Gastrocnemius medialis (tissue), 4 donors: ENCODE measurements at regions of chr20 and their contacts with region 1.

Region 1: DNA sequence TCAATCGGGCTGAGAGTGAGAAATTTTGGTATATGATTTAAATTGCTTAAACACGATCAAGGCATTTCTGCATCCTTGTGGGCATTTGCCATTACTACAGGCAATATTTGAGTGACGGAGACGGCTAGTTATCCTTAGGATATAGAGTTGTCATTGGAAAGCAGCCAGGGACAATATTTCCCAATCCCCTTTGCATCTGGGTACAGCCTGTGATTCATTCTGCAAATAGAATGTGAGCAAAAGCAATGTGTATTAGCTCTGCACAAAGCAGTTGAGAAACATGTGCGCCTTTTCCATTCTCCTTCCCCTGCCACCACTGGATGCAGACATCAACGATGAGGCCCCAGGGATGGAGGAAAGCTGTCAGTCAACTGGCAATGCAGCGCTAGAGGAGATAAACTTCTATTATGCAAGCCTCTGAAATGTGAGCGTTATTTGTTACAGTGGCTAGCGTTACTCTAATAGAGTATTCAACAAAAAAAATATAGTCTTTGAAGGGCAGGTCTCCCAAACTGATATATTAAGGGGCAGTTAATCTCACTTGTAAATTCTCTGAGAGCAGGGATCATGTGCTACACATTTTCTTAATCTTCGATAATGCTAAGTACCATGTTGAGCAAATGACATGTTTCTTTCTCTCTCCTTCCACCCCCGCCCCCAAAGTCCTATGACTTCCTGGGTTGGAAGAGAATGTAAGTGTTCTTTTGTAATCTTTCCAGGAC is 37.1 kb upstream of the NCOA3 start:
- DNase-seq: peak; percentile 91 to 92
- ATAC-seq: peak; percentile 90 to 95
- H3K4me3 ChIP-seq: peak overlapping the region in 1 of 4 donors; percentile 17
- H3K27ac ChIP-seq: peak overlapping the region; percentile 84 to 95 (median 90)
- H3K4me1 ChIP-seq: peaks cover 22 to 33% of the 10 kb centered on the region in 2 donors
- H3K27me3 ChIP-seq: no peaks in the 10 kb centered on the region
- CTCF ChIP-seq: peak; percentile 59 to 85 (median 76)
- POLR2A ChIP-seq: peak; percentile 22 to 55

Region 2: DNA sequence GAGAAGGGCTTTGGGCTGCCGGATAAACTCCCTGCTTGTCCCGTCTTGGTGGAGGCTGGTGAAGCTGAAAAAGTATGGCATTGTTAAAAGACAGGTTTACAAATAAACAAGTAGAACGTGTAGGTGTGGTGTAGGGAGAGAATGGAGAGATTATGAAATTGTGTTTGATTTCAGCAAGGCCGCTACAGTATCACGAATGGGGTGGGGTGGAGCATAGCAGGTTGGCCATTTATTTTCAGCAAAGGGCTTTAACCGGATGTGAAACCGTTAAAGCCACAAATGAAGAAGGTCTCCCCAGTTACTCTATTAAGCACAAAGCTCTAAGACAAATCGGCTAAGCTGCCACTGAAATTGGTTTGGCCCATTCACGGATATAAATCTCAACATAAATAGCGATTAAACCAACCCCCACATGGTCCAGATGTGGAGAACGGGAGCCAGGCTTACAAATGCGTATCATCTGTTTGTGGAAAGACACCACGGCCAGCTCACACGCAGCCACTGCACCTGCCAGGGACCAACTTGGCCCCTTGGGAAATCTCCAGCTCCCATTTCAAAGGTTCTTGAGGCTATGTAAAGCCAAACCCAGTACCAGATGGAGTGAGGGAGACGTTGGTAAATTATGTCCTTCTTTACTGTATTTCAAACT is 202.1 kb before region 1 on chr20:
- in situ Hi-C with region 1: no loop called
- intact Hi-C with region 1: loop called (anchors 5 kb)
- DNase-seq: peak; percentile 22 to 64
- ATAC-seq: peak; percentile 67 to 72
- H3K4me3 ChIP-seq: no peak overlapping the region
- H3K27ac ChIP-seq: peak overlapping the region; percentile 47 to 87 (median 72)
- H3K4me1 ChIP-seq: peaks cover 28 to 31% of the 10 kb centered on the region in 2 donors
- H3K27me3 ChIP-seq: no peaks in the 10 kb centered on the region
- CTCF ChIP-seq: no peak
- POLR2A ChIP-seq: no peak

Region 3: DNA sequence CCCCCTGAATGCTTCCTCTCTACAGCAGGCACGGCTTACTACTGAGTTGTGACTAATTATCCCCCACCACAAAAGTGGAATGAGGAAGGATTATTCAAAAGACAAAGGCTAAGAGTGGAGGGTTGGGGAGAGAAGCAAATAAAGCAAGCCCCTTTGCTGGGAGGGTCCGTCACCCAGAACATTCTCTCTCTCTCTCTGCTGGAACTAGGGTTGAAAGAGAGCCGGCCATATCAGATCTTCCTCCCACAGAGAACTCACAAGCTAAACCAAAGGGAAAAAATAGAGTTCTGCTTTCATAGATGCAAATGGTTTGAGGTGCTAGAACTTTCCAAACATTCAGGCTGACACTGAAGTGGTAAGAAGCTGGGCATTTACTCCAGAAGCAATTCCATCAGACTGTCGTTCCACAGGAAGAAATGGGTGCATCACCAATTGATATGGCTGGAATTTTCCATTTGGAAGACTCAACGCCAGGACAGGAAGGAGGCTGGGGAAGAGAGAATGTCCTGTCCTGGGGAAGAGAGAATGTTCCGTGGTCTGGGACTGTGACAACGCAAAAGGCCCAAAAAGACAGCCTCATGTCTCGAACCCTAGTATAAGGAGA is 115.9 kb before region 1 on chr20:
- in situ Hi-C with region 1: no loop called
- intact Hi-C with region 1: no loop called
- DNase-seq: no peak
- ATAC-seq: peak in 1 of 2 donors; percentile 30
- H3K4me3 ChIP-seq: peak overlapping the region in 2 of 4 donors; percentile 2 to 6
- H3K27ac ChIP-seq: peak overlapping the region; percentile 96 to 100 (median 97)
- H3K4me1 ChIP-seq: peaks cover 68 to 71% of the 10 kb centered on the region in 2 donors
- H3K27me3 ChIP-seq: no peaks in the 10 kb centered on the region
- CTCF ChIP-seq: no peak
- POLR2A ChIP-seq: no peak

Region 4: DNA sequence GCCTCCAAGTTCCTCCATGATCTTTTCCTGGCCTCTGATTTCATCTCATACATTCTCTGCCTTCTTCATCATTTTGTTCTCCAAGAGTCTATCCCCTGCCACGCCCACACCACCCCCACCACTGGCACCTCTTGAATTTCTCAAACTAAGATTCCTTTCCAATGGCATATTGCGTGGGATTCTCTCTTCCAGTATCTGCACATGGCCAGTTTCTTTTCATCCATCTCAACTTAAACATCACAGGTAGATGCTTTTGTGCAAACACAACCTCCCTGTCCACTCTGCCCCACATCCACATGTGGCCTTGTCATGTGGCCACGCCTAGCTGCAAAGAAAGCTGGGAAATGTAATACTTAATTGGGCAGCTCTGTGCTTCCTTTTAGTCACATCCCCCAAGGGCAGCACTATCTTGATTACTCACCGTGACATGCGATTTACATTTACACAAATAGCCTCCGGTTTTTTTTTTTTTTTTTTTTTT is 74.6 kb before region 1 on chr20:
- in situ Hi-C with region 1: no loop called
- intact Hi-C with region 1: no loop called
- DNase-seq: no peak
- ATAC-seq: no peak
- H3K4me3 ChIP-seq: no peak overlapping the region
- H3K27ac ChIP-seq: peak overlapping the region in 1 of 4 donors; percentile 10
- H3K4me1 ChIP-seq: peaks cover 0 to 3% of the 10 kb centered on the region in 2 donors
- H3K27me3 ChIP-seq: no peaks in the 10 kb centered on the region
- CTCF ChIP-seq: no peak
- POLR2A ChIP-seq: no peak

Region 5: DNA sequence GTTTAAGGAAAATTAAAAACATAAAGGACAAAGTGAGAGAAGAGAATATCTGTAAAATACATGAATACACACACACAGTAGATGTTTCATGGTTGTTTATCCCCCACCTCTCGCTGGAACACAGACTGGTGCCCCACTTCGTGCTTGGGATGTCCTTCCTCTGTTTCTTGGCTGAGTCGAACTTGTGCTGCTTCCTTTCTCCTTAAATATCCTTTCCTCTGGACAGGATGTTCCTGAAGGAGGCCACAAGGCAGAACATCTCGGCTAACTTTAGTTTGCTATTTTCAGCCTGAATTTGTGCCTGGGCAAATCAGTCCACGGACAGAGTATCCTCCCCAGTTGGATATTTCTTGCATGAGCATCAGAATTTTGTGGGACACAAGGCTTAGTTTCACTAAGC is 53.4 kb before region 1 on chr20:
- in situ Hi-C with region 1: loop called in 1 of 4 experiments (anchors 10 kb)
- intact Hi-C with region 1: loop called (anchors 2 kb)
- DNase-seq: peak; percentile 75 to 79
- ATAC-seq: peak; percentile 92 to 96
- H3K4me3 ChIP-seq: peak overlapping the region; percentile 15 to 50 (median 44)
- H3K27ac ChIP-seq: peak overlapping the region; percentile 91 to 94 (median 91)
- H3K4me1 ChIP-seq: peaks cover 23 to 54% of the 10 kb centered on the region in 2 donors
- H3K27me3 ChIP-seq: no peaks in the 10 kb centered on the region
- CTCF ChIP-seq: no peak
- POLR2A ChIP-seq: peak; percentile 63 to 83

Region 6: GRCh38 chr20:47493175-47493962 is 28.8 kb after region 1 on chr20:
- in situ Hi-C with region 1: no loop called
- intact Hi-C with region 1: loop called (anchors 2 kb)
- DNase-seq: peak; percentile 87 to 93
- ATAC-seq: peak; percentile 94 to 95
- H3K4me3 ChIP-seq: peak overlapping the region in 3 of 4 donors; percentile 5 to 7 (median 5)
- H3K27ac ChIP-seq: peak overlapping the region; percentile 80 to 87 (median 84)
- H3K4me1 ChIP-seq: peaks cover 19 to 21% of the 10 kb centered on the region in 2 donors
- H3K27me3 ChIP-seq: no peaks in the 10 kb centered on the region
- CTCF ChIP-seq: no peak
- POLR2A ChIP-seq: peak in 1 of 2 donors; percentile 28

Region 7: GRCh38 chr20:47568001-47568407 is 103.5 kb after region 1 on chr20:
- in situ Hi-C with region 1: no loop called
- intact Hi-C with region 1: loop called (anchors 1 kb)
- DNase-seq: no peak
- ATAC-seq: peak in 1 of 2 donors; percentile 11
- H3K4me3 ChIP-seq: no peak overlapping the region
- H3K27ac ChIP-seq: peak overlapping the region; percentile 55 to 88 (median 83)
- H3K4me1 ChIP-seq: peaks cover 51 to 57% of the 10 kb centered on the region in 2 donors
- H3K27me3 ChIP-seq: no peaks in the 10 kb centered on the region
- CTCF ChIP-seq: no peak
- POLR2A ChIP-seq: no peak

Region 8: DNA sequence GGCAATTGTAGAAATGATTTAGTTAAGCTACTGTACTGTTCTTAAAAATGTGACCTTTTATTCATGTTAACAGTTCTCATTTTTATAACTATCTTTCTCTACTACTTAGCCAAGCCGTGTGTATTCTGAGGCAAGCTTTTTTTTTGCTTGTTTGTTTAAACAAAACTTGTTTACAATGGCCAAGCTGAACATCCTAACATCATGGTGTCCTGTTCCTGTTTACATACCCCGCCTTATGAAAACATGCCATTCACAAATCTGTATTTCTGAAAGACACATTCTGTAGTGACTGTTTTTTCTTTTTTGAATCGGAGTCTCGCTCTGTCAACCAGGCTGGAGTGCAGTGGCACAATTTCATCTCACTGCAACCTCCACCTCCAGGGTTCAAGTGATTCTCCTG is 178.1 kb after region 1 on chr20:
- in situ Hi-C with region 1: no loop called
- intact Hi-C with region 1: no loop called
- DNase-seq: no peak
- ATAC-seq: no peak
- H3K4me3 ChIP-seq: no peak overlapping the region
- H3K27ac ChIP-seq: no peak overlapping the region
- H3K4me1 ChIP-seq: no peaks in the 10 kb centered on the region
- H3K27me3 ChIP-seq: no peaks in the 10 kb centered on the region
- CTCF ChIP-seq: no peak
- POLR2A ChIP-seq: no peak